GM13976 (cell line): ENCODE measurements at regions of chr6 and their contacts with region 1.

Region 1: DNA sequence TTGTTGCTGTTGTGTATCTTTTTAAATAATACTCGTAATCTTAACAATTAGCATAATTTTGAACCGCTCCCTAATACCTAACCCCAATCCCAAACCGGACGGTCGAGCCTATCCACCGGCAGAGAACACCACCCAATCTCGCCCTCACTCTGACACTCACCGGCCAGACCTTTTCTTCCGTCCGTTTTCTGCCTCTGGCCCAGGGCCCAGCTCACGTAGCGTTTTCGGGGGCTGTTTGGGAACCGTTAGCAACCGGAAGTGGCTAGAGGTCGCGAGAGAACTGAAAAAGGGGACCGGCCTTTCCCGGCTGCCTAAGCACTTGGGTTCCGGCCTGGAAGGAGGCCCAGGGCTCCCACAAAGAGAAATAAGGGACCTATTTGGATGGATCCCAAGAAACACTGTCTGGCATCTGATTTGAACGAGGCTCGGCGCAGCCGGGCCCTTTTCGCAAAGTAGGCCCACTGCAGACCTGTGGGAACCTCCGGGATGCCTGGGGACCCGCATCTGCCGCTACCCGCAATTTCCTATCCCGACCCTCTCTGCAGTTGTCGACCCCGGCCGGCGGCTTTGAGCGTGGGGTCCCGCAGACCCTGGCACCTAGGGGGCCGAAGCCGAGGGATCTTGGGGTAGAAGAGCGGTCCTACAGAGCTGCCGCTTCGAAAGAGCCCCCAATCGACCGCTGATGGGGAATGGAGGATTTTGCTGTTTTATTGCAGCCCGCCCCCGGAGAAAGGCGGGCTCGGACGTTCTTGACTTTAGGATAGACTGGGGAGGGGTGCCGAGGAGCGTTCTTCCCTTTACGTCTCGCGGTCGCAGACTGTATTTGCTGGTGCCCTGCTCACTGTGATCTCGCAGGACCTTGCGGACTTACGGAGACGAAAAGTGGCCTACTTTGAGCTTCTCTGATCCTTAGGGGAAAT is 4.8 kb upstream of the ZKSCAN8 start:
- DNase-seq: peak; percentile 77
- CTCF ChIP-seq: no peak

Region 2: DNA sequence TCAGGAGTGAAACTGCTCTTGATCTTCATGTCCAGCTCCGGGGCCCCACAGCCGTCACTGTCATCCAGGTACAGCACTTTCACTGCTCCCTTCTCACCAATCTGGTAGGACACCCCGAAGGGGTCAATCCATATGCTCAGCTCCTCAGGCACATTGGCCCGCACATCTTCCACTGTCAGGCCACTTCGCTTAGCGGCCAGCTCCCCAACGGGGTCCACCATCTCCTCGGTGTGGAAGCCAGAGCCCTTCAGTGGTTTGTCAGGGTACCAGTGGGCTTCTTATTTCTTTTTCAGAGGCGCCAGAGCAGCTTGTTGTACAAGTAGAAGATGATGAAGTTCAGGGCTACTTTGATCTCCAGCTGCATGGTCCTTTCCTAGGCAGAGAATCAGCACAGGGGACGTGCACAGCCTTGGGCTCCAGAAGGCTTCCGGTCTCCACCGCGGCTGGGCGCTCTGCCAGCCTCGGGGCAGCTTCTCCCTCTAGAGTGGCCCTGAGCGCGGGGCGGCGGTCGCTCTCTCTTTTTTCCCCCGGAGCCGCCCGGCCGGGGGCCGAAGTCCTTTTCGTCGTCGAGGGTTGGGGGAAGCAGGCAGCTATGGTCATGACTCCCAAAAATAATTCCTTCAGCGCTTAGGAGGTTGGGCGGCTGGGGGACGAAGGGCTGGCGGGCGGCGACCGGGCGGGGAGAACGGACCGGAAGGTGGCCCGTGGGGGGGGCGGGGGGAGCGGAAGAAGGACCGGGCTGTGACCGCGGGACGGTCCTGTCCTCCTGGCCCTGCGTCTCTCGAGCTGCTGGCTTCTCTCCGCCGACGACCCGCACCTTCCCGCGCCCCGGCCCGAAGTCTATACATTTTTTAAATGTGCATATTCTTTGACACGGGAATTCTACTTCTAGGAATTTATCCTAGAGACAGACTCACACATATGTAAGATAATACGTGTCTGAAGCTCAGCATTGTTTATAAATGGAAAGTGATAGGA is 81.7 kb after region 1 on chr6:
- in situ Hi-C with region 1: no loop called
- DNase-seq: peak; percentile 88
- CTCF ChIP-seq: no peak

Region 3: GRCh38 chr6:28383235-28384142 is 246.6 kb after region 1 on chr6:
- in situ Hi-C with region 1: loop called (anchors 10 kb)
- DNase-seq: peak; percentile 84
- CTCF ChIP-seq: no peak

Region 4: DNA sequence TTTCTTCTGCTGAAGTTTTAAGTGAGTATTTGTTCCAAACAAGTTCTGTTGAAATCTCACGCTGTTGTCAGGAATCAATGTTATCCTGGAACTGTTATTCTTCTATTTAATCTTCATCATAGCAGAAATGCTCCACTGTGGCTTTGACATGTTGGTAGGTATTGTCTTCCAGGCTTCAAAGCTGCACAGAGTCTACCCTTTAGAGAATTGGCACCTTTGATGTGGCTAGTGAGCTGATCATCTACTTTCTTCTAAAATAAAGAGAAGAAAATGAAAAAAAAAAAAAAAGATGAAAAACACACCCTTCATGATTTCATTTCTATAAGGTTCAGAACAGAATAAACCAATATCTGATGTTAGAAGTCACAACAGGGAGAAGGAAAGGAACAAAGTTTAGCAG is 312.2 kb after region 1 on chr6:
- in situ Hi-C with region 1: no loop called
- DNase-seq: no peak
- CTCF ChIP-seq: no peak

Region 5: DNA sequence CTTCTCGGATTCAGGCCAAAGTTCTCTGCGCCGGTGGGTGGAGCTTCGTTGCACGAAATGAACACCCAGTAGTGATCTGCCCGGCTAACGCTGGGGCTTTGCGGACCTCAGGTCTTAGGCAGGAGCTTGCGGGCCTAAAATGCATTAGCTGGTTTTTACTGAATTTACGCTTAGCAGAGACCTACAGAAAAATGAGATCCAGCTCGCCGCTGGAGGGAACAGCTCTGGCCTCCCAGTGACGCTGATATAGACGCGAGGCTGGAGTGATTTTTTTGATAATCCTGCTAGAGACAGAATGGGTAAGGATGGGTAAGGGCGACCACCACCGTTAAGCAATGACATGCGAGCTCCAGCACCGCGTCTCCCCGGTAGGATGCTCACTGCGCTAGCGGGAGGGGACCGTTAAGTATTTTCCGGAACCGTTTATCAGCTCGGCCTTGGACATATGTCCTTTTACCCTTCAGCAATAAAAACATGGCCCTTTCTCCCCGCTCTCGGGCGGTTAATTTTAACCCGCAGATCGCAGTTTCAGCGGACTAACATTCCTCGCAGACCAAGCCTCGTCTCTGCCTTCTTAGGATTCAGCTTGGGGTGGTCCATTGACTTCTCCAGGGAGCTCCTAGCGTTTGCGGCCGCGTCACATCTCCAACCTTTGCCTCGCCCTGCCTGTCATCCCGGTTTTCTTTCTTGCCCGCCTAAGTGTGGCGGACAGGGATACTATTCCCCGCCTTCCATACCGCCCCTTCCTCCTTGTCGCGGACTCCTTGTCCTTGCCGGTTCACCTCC is 498.1 kb after region 1 on chr6:
- in situ Hi-C with region 1: no loop called
- DNase-seq: peak; percentile 43
- CTCF ChIP-seq: no peak